HCT116 (cell line): ENCODE measurements at regions of chrX and their contacts with region 1.

Region 1: DNA sequence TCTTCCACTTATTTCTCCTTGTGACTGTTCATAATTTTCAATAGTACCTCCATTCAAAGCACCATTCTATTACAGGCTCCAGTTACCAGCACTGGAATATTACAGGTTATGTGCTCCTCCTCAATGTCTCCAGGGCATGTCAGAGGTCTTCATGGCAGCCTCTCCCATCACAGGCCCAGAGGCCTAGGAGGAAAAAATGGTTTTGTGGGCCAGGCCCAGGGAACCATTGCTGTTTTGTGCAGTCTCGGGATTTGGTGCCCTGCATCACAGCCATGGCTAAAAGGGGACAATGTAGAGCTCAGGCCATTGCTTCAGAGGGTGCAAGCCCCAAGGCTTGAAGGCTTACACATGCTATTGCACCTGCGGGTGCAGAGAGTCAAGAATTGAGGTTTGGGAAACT is 7.2 kb upstream of the PNMA3 start:
- DNase-seq: no peak
- ATAC-seq: no peak
- H3K4me3 ChIP-seq: no peak overlapping the region
- H3K27ac ChIP-seq: no peak overlapping the region
- H3K4me1 ChIP-seq: no peaks in the 10 kb centered on the region
- H3K27me3 ChIP-seq: no peaks in the 10 kb centered on the region
- CTCF ChIP-seq: no peak
- POLR2A ChIP-seq: no peak
- RAD21 ChIP-seq: no peak

Region 2: GRCh38 chrX:152575331-152575730 is 473.8 kb before region 1 on chrX:
- CTCF ChIA-PET with region 1: no interaction called
- POLR2A ChIA-PET with region 1: no interaction called
- RAD21 ChIA-PET with region 1: no interaction called
- intact Hi-C with region 1: no loop called
- DNase-seq: no peak
- ATAC-seq: no peak
- H3K4me3 ChIP-seq: no peak overlapping the region
- H3K27ac ChIP-seq: no peak overlapping the region
- H3K4me1 ChIP-seq: no peaks in the 10 kb centered on the region
- H3K27me3 ChIP-seq: peaks cover 7% of the 10 kb centered on the region; the same call in 1 of the 2 replicates
- CTCF ChIP-seq: no peak
- POLR2A ChIP-seq: no peak
- RAD21 ChIP-seq: no peak

Region 3: DNA sequence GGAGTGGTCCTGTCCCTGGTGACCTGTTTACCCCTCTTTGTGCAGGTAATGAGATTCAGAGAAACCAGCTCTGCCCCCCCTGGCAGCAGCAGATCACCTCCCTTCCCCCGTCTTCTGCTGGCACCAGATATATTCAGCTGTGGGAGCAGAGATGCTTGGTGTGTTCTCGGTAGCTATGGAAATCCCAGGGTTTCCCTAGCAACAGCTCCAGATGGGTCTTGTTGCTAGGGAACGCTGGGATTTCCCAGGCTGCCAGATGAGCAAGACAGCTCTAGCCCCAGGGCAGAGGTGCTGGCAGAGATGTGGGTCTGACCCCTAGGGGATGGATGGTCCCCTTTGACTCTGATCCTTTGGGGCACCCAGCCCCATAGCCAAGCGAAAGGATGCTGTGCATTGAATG is 238.7 kb before region 1 on chrX:
- CTCF ChIA-PET with region 1: no interaction called
- POLR2A ChIA-PET with region 1: no interaction called
- RAD21 ChIA-PET with region 1: no interaction called
- intact Hi-C with region 1: no loop called
- DNase-seq: no peak
- ATAC-seq: no peak
- H3K4me3 ChIP-seq: no peak overlapping the region
- H3K27ac ChIP-seq: no peak overlapping the region
- H3K4me1 ChIP-seq: no peaks in the 10 kb centered on the region
- H3K27me3 ChIP-seq: no peaks in the 10 kb centered on the region
- CTCF ChIP-seq: no peak
- POLR2A ChIP-seq: no peak
- RAD21 ChIP-seq: no peak

Region 4: GRCh38 chrX:153061732-153062131 is 12.6 kb after region 1 on chrX:
- CTCF ChIA-PET with region 1: no interaction called
- POLR2A ChIA-PET with region 1: no interaction called
- RAD21 ChIA-PET with region 1: no interaction called
- intact Hi-C with region 1: no loop called
- DNase-seq: no peak
- ATAC-seq: no peak
- H3K4me3 ChIP-seq: no peak overlapping the region
- H3K27ac ChIP-seq: no peak overlapping the region
- H3K4me1 ChIP-seq: peaks cover 0 to 8% of the 10 kb centered on the region in 2 experiments; a peak in 2 of 4 replicates
- H3K27me3 ChIP-seq: no peaks in the 10 kb centered on the region
- CTCF ChIP-seq: no peak
- POLR2A ChIP-seq: no peak
- RAD21 ChIP-seq: no peak

Region 5: DNA sequence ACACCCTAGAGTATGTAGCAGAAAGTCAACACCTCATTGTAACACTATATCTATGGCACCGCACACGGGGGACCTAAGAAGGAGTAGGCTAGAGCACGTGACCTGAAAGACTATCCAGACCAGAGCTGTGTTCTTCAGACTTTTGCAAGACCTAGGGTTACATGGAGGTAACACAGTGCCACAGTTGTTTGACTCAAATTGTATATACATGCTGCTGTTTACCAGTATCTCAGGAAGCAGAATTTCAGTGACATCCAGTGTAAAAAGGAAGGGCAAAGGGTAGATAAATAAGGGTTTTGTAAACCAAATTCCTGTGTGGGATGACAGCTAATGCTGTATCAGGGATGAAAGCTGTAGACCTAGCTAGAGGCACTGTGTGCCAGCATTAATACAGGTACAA is 53.3 kb after region 1 on chrX:
- CTCF ChIA-PET with region 1: no interaction called
- POLR2A ChIA-PET with region 1: no interaction called
- RAD21 ChIA-PET with region 1: no interaction called
- intact Hi-C with region 1: loop called (anchors 10 kb)
- DNase-seq: no peak
- ATAC-seq: no peak
- H3K4me3 ChIP-seq: no peak overlapping the region
- H3K27ac ChIP-seq: no peak overlapping the region
- H3K4me1 ChIP-seq: no peaks in the 10 kb centered on the region
- H3K27me3 ChIP-seq: no peaks in the 10 kb centered on the region
- CTCF ChIP-seq: no peak
- POLR2A ChIP-seq: no peak
- RAD21 ChIP-seq: no peak

Region 6: DNA sequence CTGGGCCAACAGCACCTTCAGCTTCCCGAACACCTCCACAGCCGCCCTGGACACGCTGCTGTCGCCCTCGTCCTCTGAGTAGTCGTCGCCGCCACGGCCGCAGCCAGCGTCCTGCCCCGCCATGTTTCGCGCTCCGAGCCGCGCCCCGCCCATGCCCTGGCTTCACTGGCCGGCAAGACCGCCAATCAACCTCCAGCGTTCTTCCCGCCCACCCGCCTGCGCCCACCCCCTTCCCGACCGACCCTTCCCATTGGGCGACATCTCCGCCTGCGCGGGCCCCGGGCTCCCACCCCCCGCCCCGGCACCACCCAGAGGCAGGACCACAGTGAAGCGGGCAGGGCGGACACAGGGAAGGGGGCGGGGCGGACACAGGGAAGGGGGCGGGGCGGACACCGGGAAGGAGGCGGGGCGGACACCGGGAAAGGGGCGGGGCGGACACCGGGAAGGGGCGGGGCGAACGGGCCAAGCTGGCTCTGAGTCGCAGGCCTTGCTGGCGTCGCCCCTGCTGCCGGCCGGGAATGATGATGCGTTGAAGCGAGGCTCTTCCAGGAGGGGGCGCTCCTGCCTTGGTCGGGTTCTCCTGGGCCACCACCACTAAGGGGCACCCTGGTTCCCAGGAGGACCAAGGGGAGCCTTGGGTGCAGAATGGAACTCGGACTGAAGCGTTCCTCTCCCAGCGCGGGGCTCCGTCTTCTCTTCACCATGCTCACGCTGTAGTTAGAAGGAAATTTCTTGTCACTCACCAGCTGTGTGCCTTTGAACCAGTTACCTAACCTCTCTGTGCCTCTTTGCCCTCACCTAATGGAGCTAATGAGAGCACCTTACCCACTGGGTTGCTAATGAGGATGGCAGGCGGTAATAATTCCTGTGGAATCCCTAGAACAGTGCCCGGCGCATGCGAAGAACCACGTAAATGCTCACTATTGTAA is 421.6 kb after region 1 on chrX and contains the start of gene HAUS7:
- CTCF ChIA-PET with region 1: no interaction called
- POLR2A ChIA-PET with region 1: no interaction called
- RAD21 ChIA-PET with region 1: no interaction called
- intact Hi-C with region 1: no loop called
- DNase-seq: peak; percentile 59
- ATAC-seq: peak; percentile 91
- H3K4me3 ChIP-seq: peak within 1 kb of the TSS; percentile 73 to 78
- H3K27ac ChIP-seq: peak within 1 kb of the TSS; percentile 35; the same call in 1 of the 2 replicates
- H3K4me1 ChIP-seq: peaks cover 0 to 5% of the 10 kb centered on the region in 2 experiments; a peak in 1 of 4 replicates
- H3K27me3 ChIP-seq: no peaks in the 10 kb centered on the region
- CTCF ChIP-seq: peak in 2 of 3 experiments; percentile 64 to 66; a peak in 4 of 6 replicates
- POLR2A ChIP-seq: no peak
- RAD21 ChIP-seq: no peak
- total RNA-seq, gene HAUS7: 28.9 TPM